ENCODE measurements at regions of chr15 and their contacts with region 1.

Region 1: DNA sequence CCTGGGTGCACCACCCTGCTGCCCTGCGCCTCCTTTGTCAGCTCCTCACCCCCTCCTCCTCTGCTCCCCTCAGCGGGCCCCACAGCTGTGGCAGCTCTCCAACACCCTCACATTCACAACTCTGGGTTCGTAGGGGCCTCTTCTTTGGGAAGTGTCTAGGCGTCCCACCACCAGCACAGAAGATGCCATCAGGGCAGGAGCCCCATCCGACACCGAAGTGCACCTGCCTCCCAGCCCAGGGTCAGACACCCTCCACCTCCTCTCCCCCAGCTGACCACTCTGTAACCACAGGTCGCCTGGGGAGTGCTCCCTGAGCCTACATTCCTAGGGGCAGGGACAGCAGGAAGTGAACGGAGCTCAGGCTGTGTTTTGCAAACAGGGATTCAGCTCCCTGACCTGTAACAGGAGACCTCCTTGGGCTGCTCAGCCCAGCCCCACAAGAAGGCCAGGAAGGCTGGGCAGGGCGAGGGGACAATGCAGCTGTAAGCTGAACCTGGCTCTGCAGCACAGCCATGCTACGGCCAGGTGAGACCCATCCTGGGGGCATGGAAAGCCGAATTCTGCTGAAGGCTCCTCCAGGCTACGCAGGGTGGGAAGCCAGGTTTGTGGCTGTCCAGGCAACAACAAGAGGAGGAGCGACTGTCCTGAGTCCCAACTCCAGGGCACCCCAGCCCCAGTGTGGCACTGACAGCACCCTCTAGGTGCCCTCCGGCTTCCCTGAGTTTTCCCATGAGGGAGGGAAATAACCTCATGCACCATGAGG is 269.0 kb downstream of the GOLGA6L6 start:
- DNase-seq: no peak
- ATAC-seq: peak in 1 of 2 donors; percentile 12

Region 2: DNA sequence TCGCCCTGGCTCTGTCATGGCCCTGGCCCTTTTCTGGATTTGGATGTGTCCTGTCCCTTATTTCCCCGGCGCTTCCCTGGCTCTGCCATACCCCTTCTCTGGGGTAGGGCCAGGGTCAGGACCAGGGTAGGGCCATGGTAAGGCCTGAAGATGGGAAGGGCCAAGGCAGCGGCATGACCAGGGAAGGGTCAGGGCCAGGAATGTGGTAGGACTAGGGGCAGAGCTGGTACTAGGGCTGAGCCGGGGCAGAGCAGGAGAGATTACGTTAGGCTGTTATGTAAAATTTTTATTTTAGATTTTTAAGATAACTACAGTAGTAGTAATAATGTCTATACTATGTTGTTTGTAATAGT is 32.4 kb after region 1 on chr15:
- intact Hi-C with region 1: no loop called
- DNase-seq: no peak
- ATAC-seq: no peak

Region 3: GRCh38 chr15:20386198-20386597 is 113.6 kb after region 1 on chr15:
- intact Hi-C with region 1: loop called in 1 of 2 experiments (anchors 10 kb)
- DNase-seq: no peak
- ATAC-seq: peak in 1 of 2 donors; percentile 33

Measured in left cardiac atrium (tissue), 4 donors.